Activated B cell treated with CpG ODN at 0.5 μM for 24 hours (primary cell): ENCODE measurements at regions of chr15 and their contacts with region 1.

Region 1: GRCh38 chr15:81312790-81313543 is 11.0 kb downstream of the STARD5 start:
- DNase-seq: no peak
- ATAC-seq: no peak
- H3K4me3 Mint-ChIP-seq: peak overlapping the region; percentile 50
- H3K27ac Mint-ChIP-seq: peak overlapping the region; percentile 94
- H3K4me1 Mint-ChIP-seq: peaks cover 88% of the 10 kb centered on the region
- H3K27me3 Mint-ChIP-seq: no peaks in the 10 kb centered on the region
- CTCF ChIP-seq: no peak

Region 2: DNA sequence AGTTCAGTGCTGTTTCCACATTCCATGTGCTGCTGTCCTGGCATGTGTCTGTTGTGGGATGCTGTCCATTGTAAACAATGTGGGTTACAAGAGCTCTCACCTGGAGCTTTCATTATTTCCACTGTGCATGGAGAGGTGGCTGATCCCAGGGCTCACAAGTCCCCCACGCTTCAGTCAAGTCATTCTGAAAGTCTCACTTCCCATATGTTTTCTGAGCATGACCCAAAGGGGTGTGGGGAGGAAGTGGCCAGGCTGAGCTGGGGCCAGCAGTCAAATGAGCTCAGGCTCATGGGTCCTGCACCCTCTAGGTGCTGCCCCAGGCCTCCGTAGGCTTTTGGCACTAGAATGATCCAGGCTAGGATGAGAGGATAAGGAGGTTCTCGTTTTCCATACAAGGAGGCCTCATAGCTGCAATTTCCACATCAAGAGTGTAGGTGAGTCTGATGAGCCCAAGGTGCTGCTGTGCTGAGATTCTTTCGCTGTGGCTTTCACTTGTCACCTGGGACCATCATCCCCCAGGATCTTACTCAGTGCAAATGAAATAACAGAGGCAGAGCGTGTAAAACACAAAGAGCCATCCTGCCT is 11.1 kb before region 1 on chr15:
- CTCF ChIA-PET with region 1: interaction called, 17 read pairs
- POLR2A ChIA-PET with region 1: interaction called, 631 read pairs
- intact Hi-C with region 1: loop called (anchors 1 kb)
- DNase-seq: peak; percentile 56
- ATAC-seq: peak; percentile 74
- H3K4me3 Mint-ChIP-seq: peak overlapping the region; percentile 99
- H3K27ac Mint-ChIP-seq: peak overlapping the region; percentile 99
- H3K4me1 Mint-ChIP-seq: peaks cover 96% of the 10 kb centered on the region
- H3K27me3 Mint-ChIP-seq: no peaks in the 10 kb centered on the region
- CTCF ChIP-seq: no peak

Region 3: GRCh38 chr15:81323944-81324881 is 11.2 kb after region 1 on chr15 and contains the start of gene STARD5:
- CTCF ChIA-PET with region 1: interaction called, 3 read pairs
- POLR2A ChIA-PET with region 1: interaction called, 18 read pairs
- intact Hi-C with region 1: loop called (anchors 1 kb)
- DNase-seq: peak; percentile 89
- ATAC-seq: peak; percentile 99
- H3K4me3 Mint-ChIP-seq: peak within 1 kb of the TSS; percentile 97
- H3K27ac Mint-ChIP-seq: peak within 1 kb of the TSS; percentile 80
- H3K4me1 Mint-ChIP-seq: peaks cover 35% of the 10 kb centered on the region
- H3K27me3 Mint-ChIP-seq: no peaks in the 10 kb centered on the region
- CTCF ChIP-seq: no peak
- total RNA-seq, gene STARD5: 10.5 and 14.3 TPM in 2 replicates